Gastrocnemius medialis (tissue), 4 donors: ENCODE measurements at regions of chr11 and their contacts with region 1.

Region 1: DNA sequence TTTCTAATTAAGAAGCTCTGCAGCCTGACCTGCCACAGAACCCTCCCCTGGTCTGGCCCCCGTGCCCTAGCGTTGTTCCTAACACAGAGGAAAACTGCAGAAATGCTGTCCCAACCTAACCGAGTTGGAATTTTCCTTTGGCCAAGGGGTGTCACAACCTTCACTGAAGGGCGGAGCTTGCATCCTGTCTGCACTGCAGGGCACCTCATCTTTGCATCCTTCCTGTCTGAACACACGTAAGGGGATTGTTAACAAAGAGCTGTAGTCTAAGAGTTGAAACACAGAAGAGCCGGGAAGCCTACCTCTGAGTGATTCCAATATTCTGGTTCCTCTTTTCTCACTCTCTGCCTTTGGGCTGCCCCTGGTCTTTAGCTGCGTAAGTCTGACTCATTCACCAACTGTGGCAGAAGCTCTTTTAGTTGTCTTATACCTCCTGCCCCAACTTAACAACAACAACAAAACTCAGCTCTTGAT is 1.6 kb downstream of the DIXDC1 start:
- DNase-seq: no peak
- ATAC-seq: peak in 1 of 2 donors; percentile 32
- H3K4me3 ChIP-seq: no peak overlapping the region
- H3K27ac ChIP-seq: peak overlapping the region; percentile 73 to 88 (median 82)
- H3K4me1 ChIP-seq: peaks cover 34 to 70% of the 10 kb centered on the region in 2 donors
- H3K27me3 ChIP-seq: no peaks in the 10 kb centered on the region
- CTCF ChIP-seq: no peak
- POLR2A ChIP-seq: no peak

Region 2: DNA sequence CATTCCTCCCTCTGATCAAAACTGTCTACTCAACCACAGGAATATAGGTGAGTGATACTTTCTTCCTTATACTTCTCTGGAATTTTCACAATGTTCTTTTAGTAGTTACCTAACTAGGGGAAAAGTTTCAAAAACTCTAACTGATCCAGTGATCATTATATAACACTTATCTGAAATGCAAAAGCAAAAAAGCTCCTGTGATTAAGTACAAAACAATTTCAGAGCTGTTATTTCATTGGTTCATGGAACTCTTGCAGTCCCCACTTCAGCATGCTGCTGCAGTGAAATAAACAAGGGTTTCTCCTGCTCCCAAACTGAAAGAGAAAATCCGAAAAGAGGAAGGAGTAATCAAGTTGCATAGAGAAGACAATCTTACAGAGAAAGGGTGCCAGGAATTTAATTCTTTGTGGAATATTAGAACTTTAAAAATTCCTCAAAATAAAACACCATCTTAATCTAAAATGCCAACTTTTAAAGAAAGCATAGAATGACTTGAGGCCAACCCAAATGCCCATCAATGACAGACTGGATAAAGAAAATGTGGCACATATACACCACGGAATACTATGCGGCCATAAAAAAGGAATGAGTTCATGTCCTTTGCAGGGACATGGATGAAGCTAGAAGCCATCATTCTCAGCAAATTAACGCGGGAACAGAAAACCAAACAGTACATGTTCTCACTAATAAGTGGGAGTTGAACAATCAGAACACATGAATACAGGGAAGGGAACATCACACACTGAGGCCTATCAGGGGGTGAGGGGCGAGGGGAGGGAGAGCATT is 192.8 kb before region 1 on chr11:
- in situ Hi-C with region 1: no loop called
- intact Hi-C with region 1: no loop called
- DNase-seq: no peak
- ATAC-seq: no peak
- H3K4me3 ChIP-seq: no peak overlapping the region
- H3K27ac ChIP-seq: peak overlapping the region in 1 of 4 donors; percentile 16
- H3K4me1 ChIP-seq: peaks cover 0 to 16% of the 10 kb centered on the region in 2 donors
- H3K27me3 ChIP-seq: no peaks in the 10 kb centered on the region
- CTCF ChIP-seq: no peak
- POLR2A ChIP-seq: no peak

Region 3: DNA sequence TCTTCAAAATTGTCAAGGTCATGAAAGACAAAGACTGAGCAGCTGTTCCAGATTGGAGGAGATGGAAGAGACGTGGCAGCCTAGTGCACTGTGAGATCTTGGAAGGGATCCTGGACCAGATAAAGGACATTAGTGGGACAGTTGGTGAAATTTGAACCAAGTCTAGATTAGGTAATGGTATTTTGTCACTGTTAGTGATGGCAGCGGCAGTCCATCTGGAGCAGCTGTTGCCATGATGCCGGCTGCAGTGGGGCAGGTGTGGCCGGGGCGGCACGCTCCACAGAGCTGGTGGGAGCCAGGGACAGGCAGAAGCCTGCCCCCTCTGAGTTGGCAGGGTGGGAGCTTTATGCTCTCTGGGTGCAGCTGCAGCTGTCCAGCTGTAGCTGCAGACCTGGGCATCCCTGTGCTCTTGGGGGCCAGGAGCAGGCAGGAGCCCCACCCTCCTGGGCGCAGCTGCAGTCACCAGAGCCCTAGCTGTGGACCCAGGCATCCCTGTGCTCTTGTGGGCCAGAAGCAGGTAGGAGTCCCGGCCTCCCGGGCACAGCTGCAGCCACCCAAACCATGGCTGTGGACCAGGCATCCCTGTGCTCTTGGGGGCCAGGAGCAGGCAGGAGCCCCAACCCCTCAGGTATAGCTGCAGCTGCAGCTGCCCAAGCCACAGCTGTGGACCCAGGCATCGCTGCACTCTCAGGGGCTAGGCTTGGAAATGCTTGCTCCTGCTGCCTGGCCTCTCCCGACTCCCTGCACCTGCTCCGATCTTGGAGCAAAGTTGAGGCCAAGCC is 19.1 kb after region 1 on chr11:
- in situ Hi-C with region 1: no loop called
- intact Hi-C with region 1: loop called (anchors 1 kb)
- DNase-seq: peak; percentile 66 to 80
- ATAC-seq: peak; percentile 91 to 95
- H3K4me3 ChIP-seq: no peak overlapping the region
- H3K27ac ChIP-seq: peak overlapping the region; percentile 59 to 77 (median 66)
- H3K4me1 ChIP-seq: peaks cover 8 to 13% of the 10 kb centered on the region in 2 donors
- H3K27me3 ChIP-seq: no peaks in the 10 kb centered on the region
- CTCF ChIP-seq: no peak
- POLR2A ChIP-seq: peak; percentile 27 to 30

Region 4: DNA sequence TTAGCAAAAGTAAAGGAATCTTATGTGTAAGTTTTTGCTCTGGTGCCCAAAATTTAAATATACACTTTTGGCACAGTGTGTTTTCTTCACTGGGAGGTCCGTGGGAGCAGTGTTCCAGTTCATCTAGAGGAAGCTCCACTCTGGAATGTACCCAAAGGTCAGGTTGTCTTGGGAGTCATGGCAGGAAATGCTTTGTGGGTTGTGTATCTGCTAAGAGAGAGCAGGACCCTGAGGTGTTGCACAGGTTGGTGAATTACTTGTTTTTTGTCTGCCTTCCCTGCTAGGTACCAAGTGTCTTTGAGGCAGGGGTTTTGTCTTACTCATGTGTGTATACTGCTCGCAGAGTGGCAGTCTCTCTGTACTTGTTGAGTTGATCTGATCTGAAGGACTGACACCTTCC is 35.7 kb after region 1 on chr11:
- in situ Hi-C with region 1: loop called in 1 of 4 experiments (anchors 5 kb)
- intact Hi-C with region 1: no loop called
- DNase-seq: no peak
- ATAC-seq: no peak
- H3K4me3 ChIP-seq: no peak overlapping the region
- H3K27ac ChIP-seq: peak overlapping the region in 2 of 4 donors; percentile 73 to 83
- H3K4me1 ChIP-seq: peaks cover 18 to 25% of the 10 kb centered on the region in 2 donors
- H3K27me3 ChIP-seq: no peaks in the 10 kb centered on the region
- CTCF ChIP-seq: no peak
- POLR2A ChIP-seq: no peak

Region 5: DNA sequence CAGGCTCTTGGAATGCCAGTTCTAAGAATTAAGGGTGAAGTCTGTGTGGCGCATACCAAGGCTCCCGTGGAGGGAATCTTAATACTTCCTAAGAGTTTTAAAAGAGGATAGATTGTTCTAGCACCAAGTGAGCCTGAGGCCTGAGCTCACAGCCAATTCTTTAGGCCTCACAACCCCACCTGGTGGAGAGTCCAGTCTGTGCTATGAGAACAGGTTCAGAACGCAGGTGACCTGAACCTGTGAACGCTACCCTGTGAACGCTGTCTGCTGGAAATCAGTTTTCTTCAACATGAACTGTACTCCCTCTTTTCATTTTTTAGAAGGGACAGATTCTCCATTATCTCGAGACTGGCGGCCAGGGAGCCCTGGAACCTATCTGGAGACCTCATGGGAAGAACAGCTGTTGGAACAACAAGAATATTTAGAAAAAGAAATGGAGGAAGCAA is 43.3 kb after region 1 on chr11:
- in situ Hi-C with region 1: loop called in 2 of 4 experiments (anchors 5 kb)
- intact Hi-C with region 1: no loop called
- DNase-seq: peak; percentile 39 to 76
- ATAC-seq: peak; percentile 82 to 92
- H3K4me3 ChIP-seq: no peak overlapping the region
- H3K27ac ChIP-seq: peak overlapping the region; percentile 13 to 42 (median 39)
- H3K4me1 ChIP-seq: peaks cover 14 to 25% of the 10 kb centered on the region in 2 donors
- H3K27me3 ChIP-seq: no peaks in the 10 kb centered on the region
- CTCF ChIP-seq: peak; percentile 69 to 82 (median 73)
- POLR2A ChIP-seq: no peak

Region 6: GRCh38 chr11:112074026-112074811 is 135.5 kb after region 1 on chr11 and contains the start of gene NKAPD1:
- in situ Hi-C with region 1: no loop called
- intact Hi-C with region 1: no loop called
- DNase-seq: peak; percentile 52 to 69
- ATAC-seq: peak; percentile 91 to 94
- H3K4me3 ChIP-seq: peak within 1 kb of the TSS; percentile 70 to 86 (median 83)
- H3K27ac ChIP-seq: peak within 1 kb of the TSS; percentile 82 to 96 (median 88)
- H3K4me1 ChIP-seq: peaks cover 15 to 22% of the 10 kb centered on the region in 2 donors
- H3K27me3 ChIP-seq: no peaks in the 10 kb centered on the region
- CTCF ChIP-seq: no peak
- POLR2A ChIP-seq: peak in 1 of 2 donors; percentile 43
- total RNA-seq, gene NKAPD1: 4.0 to 10.5 (median 9.0) TPM

Region 7: DNA sequence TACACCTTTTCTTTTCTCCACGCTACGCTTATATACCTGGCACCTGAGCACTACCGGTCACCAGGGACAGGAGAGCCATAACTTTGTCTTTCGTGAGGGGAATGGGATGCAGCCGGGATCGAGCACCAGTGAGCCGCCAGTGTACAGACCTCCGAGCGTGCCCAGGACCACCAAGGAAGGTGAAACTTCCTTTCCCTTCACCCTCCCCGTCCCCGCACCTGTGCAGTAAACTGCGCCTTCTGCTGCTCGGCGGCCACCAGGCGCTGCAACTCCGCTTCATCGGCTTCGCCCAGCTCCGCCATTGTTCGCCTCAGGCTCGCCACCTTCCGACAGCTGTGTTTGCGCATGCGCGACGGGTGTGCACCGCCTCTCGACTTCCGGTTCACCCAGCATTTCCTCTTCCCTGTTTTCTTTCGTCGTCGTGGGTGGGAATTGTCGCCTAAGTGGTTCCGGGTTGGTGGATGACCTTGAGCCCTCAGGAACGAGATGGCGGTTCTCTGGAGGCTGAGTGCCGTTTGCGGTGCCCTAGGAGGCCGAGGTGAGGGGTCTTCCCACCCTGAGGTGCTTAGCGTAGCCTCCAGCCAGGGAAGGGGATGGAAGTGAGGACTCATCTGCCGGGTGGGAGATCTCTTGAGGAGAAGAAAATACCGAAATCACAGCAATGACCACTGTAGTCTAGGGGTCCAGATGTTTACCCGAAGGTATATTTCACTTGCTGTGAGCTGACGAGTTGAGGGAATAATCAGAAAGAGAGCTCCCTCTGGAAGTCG is 147.9 kb after region 1 on chr11 and contains the starts of genes SDHD and TIMM8B:
- in situ Hi-C with region 1: no loop called
- intact Hi-C with region 1: loop called (anchors 10 kb)
- DNase-seq: peak; percentile 94 to 96
- ATAC-seq: peak; percentile 96 to 97
- H3K4me3 ChIP-seq: peak within 1 kb of the TSS; percentile 82 to 99 (median 90)
- H3K27ac ChIP-seq: peak within 1 kb of the TSS; percentile 79 to 97 (median 90)
- H3K4me1 ChIP-seq: peaks cover 49 to 66% of the 10 kb centered on the region in 2 donors
- H3K27me3 ChIP-seq: no peaks in the 10 kb centered on the region
- CTCF ChIP-seq: peak in 4 of 5 experiments; percentile 19 to 39 (median 33)
- POLR2A ChIP-seq: peak; percentile 86 to 92
- total RNA-seq, gene SDHD: 170 to 261 (median 202) TPM
- total RNA-seq, gene TIMM8B: 60.3 to 93.2 (median 69.4) TPM

Region 8: DNA sequence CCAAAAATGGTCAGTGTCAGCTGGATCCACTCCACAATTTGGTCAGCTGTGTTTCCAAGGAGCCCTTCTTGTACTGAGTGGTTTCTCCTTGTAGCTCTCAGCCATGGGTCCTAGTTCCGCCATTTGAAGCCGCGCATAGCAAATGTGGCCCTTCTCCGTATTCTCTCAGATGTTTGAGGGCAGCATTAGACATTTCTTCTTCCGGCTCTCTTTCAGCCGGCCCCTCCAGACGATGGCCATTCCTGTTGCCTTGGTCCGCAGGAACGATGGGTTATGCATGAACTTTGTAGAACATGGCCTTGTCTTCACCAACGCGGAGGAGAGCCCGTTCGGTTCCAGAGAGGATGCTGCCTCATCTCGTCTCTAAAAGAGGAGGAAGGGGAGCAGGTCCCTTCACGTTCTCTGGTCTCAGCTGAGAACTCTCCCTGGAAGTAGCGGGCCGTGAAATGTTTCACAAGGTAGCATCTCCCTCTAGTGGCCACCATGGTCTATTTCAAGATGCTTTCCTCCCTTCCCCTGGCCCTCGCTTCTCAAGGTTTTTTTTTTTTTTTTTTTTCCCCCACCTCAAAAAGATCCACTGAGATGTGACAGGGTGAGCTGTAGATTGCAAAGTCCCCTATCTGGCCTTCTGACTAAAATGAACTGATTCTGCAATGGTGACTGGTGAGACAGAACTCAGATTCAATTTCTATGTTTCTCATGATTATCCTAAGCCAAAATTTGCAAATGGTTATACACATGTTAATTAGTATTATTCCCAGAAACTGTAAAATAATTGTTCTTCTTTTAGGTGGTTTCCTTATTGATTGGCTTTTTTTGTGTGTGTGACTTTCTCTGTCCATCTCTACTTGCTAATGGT is 341.8 kb after region 1 on chr11:
- in situ Hi-C with region 1: no loop called
- intact Hi-C with region 1: no loop called
- DNase-seq: peak; percentile 35 to 59
- ATAC-seq: peak; percentile 84 to 96
- H3K4me3 ChIP-seq: peak overlapping the region; percentile 43 to 67 (median 60)
- H3K27ac ChIP-seq: peak overlapping the region in 1 of 4 donors; percentile 29
- H3K4me1 ChIP-seq: peaks cover 0 to 4% of the 10 kb centered on the region in 2 donors
- H3K27me3 ChIP-seq: no peaks in the 10 kb centered on the region
- CTCF ChIP-seq: peak; percentile 48 to 73 (median 66)
- POLR2A ChIP-seq: no peak